Right ventricle myocardium inferior (tissue), 1 donor: ENCODE measurements at regions of chr10 and their contacts with region 1.

Region 1: GRCh38 chr10:91908337-91909116 is 759 bp downstream of the FGFBP3 start:
- DNase-seq: peak; percentile 90
- ATAC-seq: peak; percentile 95

Region 2: DNA sequence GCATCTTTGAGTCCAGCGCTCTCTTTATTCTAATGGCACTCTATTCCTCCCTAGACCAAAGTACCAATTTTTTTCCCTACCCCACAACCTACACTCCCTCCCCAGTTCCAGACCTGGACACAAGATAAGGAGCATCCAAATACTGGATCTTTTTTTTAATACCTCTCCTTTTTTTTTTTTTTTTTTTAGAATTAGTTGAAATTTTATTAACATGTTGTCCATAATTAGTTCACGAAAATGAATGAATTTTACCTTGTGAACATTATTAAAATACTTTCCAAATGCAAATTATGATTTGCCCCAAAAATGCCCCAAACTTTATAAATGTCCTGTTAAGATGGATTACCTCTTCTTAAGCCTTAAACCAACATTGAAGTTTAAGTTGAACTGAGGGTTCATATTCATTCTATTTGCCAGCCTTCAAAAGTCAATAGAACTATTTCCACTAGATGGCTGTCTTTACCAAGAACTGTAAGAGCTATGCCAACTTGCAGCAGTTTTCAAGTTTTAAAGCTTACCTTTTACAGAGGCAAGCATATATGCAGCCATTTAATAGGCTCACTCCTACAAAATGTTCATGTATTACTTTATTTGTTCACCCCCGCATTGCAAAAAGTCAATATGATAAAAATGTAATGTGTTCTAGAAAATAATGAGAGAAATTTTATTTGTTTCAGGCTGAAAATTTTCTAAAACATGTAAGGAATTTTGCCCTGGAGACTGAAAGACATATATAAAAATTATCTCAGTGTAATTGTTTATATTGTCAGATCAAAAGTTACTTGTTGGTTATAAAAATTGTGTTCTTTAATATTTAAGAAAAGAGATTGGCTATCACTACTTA is 150.0 kb before region 1 on chr10:
- intact Hi-C with region 1: loop called (anchors 1 kb)
- DNase-seq: no peak
- ATAC-seq: no peak

Region 3: GRCh38 chr10:91797874-91798648 is 110.5 kb before region 1 on chr10 and contains the start of gene TNKS2:
- intact Hi-C with region 1: loop called (anchors 10 kb)
- DNase-seq: peak; percentile 97
- ATAC-seq: peak; percentile 95
- total RNA-seq, gene TNKS2: 13.5 TPM

Region 4: DNA sequence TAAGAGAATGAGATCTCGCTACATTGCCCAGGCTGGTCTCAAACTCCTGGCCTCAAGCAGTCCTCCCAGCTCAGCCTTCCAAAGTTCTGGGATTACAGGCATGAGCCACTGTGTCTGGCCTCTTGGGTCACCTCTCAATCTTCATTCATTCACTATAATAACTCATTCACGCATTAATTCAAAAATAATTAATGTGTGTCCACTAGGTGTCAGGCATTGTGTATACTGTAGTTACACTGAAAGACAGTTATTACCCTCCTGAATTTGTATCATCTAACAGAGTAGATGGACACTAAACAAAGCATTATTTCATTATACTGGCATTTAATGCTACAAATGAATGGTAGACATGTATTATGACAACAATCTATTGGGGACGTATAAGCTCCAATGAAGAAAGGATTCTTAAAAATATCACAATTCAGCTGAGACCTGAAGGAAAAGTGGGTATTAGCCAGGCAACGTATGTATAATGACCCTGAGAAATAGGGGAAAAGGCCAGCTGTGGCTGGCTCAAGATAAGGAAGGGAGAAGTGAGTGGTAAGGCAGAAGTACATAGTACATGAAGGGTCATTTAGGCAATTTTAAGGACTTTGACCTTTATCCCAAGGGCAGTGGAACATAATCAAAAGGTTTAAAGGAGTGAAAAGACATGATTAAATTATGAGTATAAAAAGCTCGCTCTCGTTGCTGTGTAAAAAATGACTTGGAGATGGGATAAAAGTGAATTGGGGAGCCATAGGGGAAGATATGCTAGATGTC is 165.8 kb after region 1 on chr10:
- intact Hi-C with region 1: no loop called
- DNase-seq: no peak
- ATAC-seq: no peak